ENCODE measurements at regions of chr2 and their contacts with region 1.

Region 1: GRCh38 chr2:191165176-191165643 is 14.4 kb upstream of the STAT4 start:
- DNase-seq: no peak
- H3K4me3 ChIP-seq: no peak overlapping the region
- H3K27ac ChIP-seq: no peak overlapping the region
- H3K4me1 ChIP-seq: peaks cover 25 to 35% (median 32%) of the 10 kb centered on the region in 4 donors
- H3K27me3 ChIP-seq: no peaks in the 10 kb centered on the region
- CTCF ChIP-seq: peak; percentile 52 to 74 (median 60)
- EP300 ChIP-seq: no peak
- POLR2A ChIP-seq: no peak

Region 2: GRCh38 chr2:190858817-190859216 is 306.4 kb before region 1 on chr2:
- intact Hi-C with region 1: no loop called
- DNase-seq: no peak
- H3K4me3 ChIP-seq: peak overlapping the region in 1 of 4 donors; percentile 10
- H3K27ac ChIP-seq: peak overlapping the region; percentile 7 to 58 (median 36)
- H3K4me1 ChIP-seq: peaks cover 8 to 54% (median 49%) of the 10 kb centered on the region in 4 donors
- H3K27me3 ChIP-seq: no peaks in the 10 kb centered on the region
- CTCF ChIP-seq: no peak
- EP300 ChIP-seq: no peak
- POLR2A ChIP-seq: no peak

Region 3: DNA sequence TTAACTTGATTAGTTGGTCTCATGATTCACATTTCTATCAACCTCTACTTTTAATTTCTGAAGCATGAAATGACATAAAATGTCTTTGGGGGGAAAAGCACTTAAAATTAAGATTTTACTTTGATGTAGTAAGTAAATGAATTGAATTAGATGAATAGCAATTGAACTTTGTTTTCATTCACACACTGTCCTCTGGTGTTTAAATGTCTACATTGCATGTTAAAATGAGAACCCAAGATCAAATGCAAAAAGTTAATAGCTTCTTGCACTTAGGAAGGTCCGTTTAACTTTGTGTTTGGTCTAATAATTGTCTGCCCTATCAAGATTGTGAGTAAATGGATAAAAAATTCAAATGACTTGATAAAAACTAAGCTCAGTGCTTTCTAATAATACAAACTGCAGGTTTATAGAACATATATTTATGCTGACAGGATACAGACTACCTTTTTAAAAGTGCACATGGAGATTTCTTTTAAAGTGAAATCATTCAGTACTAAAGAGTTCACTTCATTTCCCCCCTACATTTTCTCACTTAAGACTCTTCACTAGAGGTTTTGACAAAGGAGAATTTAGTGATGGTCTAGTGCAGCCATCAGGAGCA is 356.5 kb after region 1 on chr2:
- intact Hi-C with region 1: loop called (anchors 2 kb)
- DNase-seq: no peak
- H3K4me3 ChIP-seq: no peak overlapping the region
- H3K27ac ChIP-seq: no peak overlapping the region
- H3K4me1 ChIP-seq: no peaks in the 10 kb centered on the region
- H3K27me3 ChIP-seq: no peaks in the 10 kb centered on the region
- CTCF ChIP-seq: peak; percentile 69 to 83 (median 75)
- EP300 ChIP-seq: no peak
- POLR2A ChIP-seq: no peak